ENCODE measurements at regions of chr10 and their contacts with region 1.

Region 1: GRCh38 chr10:104045151-104046089 is 40.3 kb downstream of the COL17A1 start:
- DNase-seq: peak; percentile 59 to 69
- H3K4me3 ChIP-seq: no peak overlapping the region
- H3K27ac ChIP-seq: no peak overlapping the region
- H3K4me1 ChIP-seq: peaks cover 0 to 9% of the 10 kb centered on the region in 2 donors
- H3K27me3 ChIP-seq: no peaks in the 10 kb centered on the region
- CTCF ChIP-seq: peak; percentile 16 to 69 (median 58)
- POLR2A ChIP-seq: no peak

Region 2: DNA sequence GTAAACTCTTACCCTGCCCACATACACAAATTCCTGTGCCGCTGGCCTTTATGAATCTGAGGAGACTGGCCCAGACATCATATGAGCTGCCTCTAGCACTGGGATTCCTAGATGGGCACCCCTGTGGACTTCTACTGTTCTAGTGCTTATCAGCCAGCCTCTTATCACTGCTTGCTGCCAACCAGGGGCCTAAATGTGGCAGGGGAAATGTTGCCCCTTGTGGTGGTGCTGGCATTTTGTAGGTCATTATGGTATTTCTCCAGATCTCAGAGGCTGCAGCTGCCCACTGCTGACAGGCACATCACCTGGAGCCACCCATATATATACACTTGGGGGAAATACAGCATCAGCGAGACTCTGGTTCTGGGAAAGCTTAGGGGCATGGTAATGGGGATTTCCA is 82.0 kb after region 1 on chr10:
- intact Hi-C with region 1: loop called (anchors 5 kb)
- DNase-seq: peak; percentile 19 to 22
- H3K4me3 ChIP-seq: no peak overlapping the region
- H3K27ac ChIP-seq: peak overlapping the region; percentile 44 to 54 (median 47)
- H3K4me1 ChIP-seq: peaks cover 5 to 20% of the 10 kb centered on the region in 2 donors
- H3K27me3 ChIP-seq: no peaks in the 10 kb centered on the region
- CTCF ChIP-seq: peak in 1 of 6 experiments; percentile 22
- POLR2A ChIP-seq: no peak

Region 3: DNA sequence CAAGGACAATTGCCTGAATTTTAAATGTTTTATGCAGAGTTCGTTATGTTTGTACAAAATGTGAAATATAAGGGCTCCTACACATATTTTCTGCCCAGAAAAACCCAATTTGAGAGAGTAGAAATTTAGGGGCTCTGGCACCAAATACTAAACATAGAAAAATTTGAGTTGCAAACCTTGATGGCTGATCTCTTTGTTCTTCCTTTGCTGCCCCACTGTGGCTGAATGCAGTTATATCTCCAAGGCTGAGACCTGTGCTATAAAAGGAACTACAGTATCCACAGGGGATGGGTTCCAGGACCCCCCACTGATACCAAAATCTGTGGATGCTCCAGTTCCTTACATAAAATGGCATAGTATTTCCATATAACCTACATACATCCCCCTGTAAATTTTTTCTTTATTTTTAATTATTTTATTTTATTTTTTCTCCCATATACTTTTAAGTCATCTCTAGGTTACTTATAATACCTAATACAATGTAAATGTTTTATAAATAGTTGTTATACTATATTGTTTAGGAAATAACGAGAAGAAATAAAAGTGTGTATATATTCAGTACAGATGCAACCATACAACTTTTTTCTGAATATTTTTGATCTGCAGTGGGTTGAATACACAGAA is 164.3 kb after region 1 on chr10:
- intact Hi-C with region 1: loop called (anchors 5 kb)
- DNase-seq: peak; percentile 29 to 35
- H3K4me3 ChIP-seq: no peak overlapping the region
- H3K27ac ChIP-seq: no peak overlapping the region
- H3K4me1 ChIP-seq: no peaks in the 10 kb centered on the region
- H3K27me3 ChIP-seq: no peaks in the 10 kb centered on the region
- CTCF ChIP-seq: peak in 4 of 6 experiments; percentile 35 to 56 (median 54)
- POLR2A ChIP-seq: no peak